ENCODE measurements at regions of chr2 and their contacts with region 1.

Region 1: DNA sequence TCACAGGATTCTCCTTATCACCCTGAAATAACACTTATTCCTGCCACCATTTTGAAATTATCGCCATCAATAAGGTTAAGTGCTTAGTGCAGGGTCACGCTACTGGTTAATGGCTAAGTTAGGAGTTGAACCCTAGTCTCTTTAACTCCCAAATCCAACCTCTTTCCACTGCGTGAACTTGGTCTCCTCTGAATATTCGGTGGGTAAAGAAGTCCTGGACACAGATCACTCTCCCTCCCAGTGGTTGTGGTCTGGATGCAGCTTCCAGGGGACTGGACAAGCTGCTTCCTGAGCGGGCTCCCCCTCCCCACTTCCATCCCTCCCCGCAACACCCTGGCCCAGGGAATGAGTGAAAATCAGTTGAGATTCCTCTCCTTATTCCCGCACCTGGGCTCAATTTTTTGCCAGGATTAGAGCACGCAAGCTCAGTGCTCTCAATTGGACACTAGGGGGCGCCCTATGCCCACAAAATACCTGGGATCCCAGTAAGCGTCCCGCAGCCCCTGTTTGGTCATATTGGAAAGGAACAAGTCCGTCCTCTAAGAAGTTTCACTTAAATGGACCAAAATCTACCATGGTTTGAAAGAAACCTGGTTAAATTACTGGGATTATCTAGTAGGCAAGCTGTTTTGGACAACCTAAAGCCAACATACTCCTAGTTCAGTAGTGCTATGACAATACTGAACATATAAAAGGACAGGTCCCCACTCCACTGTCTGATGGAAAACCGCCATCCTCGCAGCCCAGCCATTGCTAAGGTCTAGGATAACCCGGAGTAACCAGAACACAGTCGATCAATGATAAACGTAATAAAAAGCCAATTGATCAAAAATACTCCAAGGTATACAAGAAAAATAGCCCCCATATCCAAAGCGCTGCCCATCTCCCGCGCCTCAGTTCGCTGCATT is 40.4 kb downstream of the DHRS9 start:
- DNase-seq: peak; percentile 49 to 89
- H3K4me3 ChIP-seq: peak overlapping the region in 2 of 4 experiments; percentile 5 to 35; a peak in 2 of 8 replicates
- H3K27ac ChIP-seq: no peak overlapping the region
- H3K4me1 ChIP-seq: peaks cover 0 to 6% (median 3%) of the 10 kb centered on the region in 4 experiments; a peak in 3 of 7 replicates
- H3K27me3 ChIP-seq: no peaks in the 10 kb centered on the region
- CTCF ChIP-seq: peak; percentile 71 to 87 (median 86)
- EP300 ChIP-seq: no peak
- POLR2A ChIP-seq: no peak
- RAD21 ChIP-seq: peak; percentile 94 to 95

Region 2: GRCh38 chr2:169095621-169096105 is 14.1 kb before region 1 on chr2:
- CTCF ChIA-PET with region 1: interaction called, 23 read pairs
- POLR2A ChIA-PET with region 1: no interaction called
- DNase-seq: no peak
- H3K4me3 ChIP-seq: no peak overlapping the region
- H3K27ac ChIP-seq: no peak overlapping the region
- H3K4me1 ChIP-seq: no peaks in the 10 kb centered on the region
- H3K27me3 ChIP-seq: no peaks in the 10 kb centered on the region; a peak in 2 of 7 replicates
- CTCF ChIP-seq: no peak
- EP300 ChIP-seq: no peak
- POLR2A ChIP-seq: no peak
- RAD21 ChIP-seq: no peak

Region 3: GRCh38 chr2:169131587-169132512 is 22.1 kb after region 1 on chr2:
- CTCF ChIA-PET with region 1: interaction called, 59 read pairs
- POLR2A ChIA-PET with region 1: interaction called, 4 read pairs
- DNase-seq: no peak
- H3K4me3 ChIP-seq: no peak overlapping the region
- H3K27ac ChIP-seq: no peak overlapping the region
- H3K4me1 ChIP-seq: no peaks in the 10 kb centered on the region
- H3K27me3 ChIP-seq: no peaks in the 10 kb centered on the region
- CTCF ChIP-seq: peak in 2 of 3 experiments; percentile 39 to 71; a peak in 2 of 4 replicates
- EP300 ChIP-seq: no peak
- POLR2A ChIP-seq: no peak
- RAD21 ChIP-seq: peak; percentile 34 to 44

Region 4: DNA sequence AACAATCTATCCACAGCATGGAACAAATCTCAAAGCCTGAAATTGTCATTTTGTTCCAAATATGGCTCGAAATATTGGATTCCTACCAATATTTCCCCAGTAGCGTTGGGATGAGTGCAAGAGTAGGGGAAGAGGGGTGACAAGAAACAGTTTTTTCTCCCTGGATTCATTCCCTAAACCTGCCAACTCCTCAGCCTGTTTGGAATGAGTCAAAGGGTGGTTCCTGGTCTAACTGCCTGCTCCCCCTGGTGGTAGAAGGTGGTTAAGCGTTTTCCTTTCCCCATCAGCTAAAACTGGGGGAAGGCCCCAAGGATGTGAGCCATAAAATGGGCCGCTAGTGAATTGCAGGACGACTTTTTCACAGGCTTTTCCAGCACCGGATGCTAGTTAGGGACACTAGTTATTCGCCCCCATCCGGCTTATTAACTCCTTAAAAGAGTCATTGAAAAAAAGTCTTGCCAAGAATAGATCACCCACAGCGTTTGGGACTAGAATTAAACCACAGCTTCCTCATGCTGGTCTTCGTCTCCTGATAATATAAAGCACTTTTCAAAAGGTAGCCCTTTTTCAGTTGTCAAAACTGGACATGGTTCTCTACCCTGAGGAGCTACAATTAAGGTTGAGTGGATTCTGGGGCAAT is 32.1 kb after region 1 on chr2:
- CTCF ChIA-PET with region 1: interaction called, 74 read pairs
- POLR2A ChIA-PET with region 1: no interaction called
- DNase-seq: peak; percentile 31 to 90
- H3K4me3 ChIP-seq: no peak overlapping the region
- H3K27ac ChIP-seq: no peak overlapping the region
- H3K4me1 ChIP-seq: peaks cover 0 to 10% (median 7%) of the 10 kb centered on the region in 4 experiments; a peak in 5 of 7 replicates
- H3K27me3 ChIP-seq: no peaks in the 10 kb centered on the region
- CTCF ChIP-seq: peak; percentile 75 to 94 (median 76)
- EP300 ChIP-seq: no peak
- POLR2A ChIP-seq: no peak
- RAD21 ChIP-seq: peak; percentile 55 to 70

Region 5: DNA sequence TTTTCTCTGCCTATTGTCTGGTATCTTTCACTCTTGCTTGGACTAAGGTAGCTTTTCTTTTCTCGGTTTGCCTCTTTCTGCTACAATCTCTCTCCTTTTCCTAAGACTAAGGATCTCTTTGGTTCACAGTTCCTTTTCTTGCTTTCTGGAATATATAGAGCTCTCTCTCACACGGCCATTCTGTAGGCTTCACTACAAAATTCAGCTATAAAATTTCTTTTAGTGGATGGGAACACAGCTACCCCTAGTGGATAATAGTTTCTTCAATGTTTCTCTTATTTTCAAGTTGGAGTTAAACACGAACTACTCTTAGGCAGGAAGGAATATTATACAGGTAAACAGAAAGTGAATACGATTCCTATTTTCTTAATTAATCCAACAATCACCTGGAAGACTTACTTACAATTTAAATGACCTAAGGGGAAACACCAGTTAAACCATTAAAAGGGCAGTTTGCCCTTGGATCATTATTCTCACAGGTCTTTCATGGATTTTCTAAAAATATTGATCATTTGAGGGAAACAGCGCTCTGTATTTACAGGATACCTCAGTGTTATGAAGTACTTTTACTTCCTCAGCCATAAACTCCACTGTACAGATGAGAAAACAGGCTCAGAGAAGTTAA is 112.1 kb after region 1 on chr2:
- CTCF ChIA-PET with region 1: interaction called, 66 read pairs
- POLR2A ChIA-PET with region 1: no interaction called
- DNase-seq: no peak
- H3K4me3 ChIP-seq: no peak overlapping the region
- H3K27ac ChIP-seq: no peak overlapping the region
- H3K4me1 ChIP-seq: no peaks in the 10 kb centered on the region
- H3K27me3 ChIP-seq: no peaks in the 10 kb centered on the region
- CTCF ChIP-seq: peak in 2 of 3 experiments; percentile 16 to 46; a peak in 2 of 4 replicates
- EP300 ChIP-seq: no peak
- POLR2A ChIP-seq: no peak
- RAD21 ChIP-seq: peak; percentile 57 to 65

Region 6: DNA sequence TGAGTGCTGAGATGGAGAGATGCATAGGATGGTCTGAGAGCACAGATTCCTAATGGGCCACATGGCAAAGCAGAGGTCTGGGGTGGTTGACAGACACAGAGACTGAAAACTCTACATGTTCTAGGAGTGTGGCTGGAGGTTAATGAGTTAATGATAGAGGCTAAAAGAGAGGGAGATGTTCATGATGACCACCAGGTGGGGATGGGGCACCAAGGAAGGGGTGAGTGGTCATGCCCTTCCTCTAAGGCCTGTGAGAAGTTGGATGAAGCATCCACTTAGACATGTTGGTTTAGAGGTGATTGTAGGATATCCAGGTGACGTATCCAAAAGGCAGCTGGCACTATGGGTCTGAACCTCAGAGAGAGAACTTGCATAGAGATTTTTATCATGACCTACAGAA is 150.5 kb after region 1 on chr2:
- CTCF ChIA-PET with region 1: no interaction called
- POLR2A ChIA-PET with region 1: no interaction called
- DNase-seq: peak; percentile 21 to 52
- H3K4me3 ChIP-seq: no peak overlapping the region
- H3K27ac ChIP-seq: no peak overlapping the region
- H3K4me1 ChIP-seq: peaks cover 0 to 4% (median 0%) of the 10 kb centered on the region in 4 experiments; a peak in 1 of 7 replicates
- H3K27me3 ChIP-seq: no peaks in the 10 kb centered on the region
- CTCF ChIP-seq: peak; percentile 62 to 78 (median 70)
- EP300 ChIP-seq: no peak
- POLR2A ChIP-seq: no peak
- RAD21 ChIP-seq: peak; percentile 89 to 94

Region 7: DNA sequence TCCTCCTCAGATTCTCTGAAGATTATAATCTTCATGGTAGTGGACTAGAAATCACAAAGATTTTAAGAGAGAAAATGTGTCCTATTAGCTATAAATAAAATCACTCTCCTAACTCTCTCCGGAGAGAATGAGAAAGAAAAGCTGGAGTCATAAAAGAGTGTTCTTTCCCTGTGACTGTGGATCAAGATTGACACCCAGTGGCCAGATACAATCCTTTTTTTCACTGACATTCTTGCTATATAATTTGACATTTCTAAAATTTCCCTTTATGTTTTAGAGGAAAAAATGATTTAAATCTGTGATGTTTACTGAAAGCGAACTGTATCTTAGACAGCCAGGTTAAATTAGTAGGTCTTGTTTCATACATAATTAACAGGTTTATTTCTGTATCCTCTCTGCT is 287.9 kb after region 1 on chr2:
- CTCF ChIA-PET with region 1: interaction called, 39 read pairs
- POLR2A ChIA-PET with region 1: no interaction called
- DNase-seq: no peak
- H3K4me3 ChIP-seq: no peak overlapping the region
- H3K27ac ChIP-seq: no peak overlapping the region
- H3K4me1 ChIP-seq: peaks cover 0 to 9% (median 3%) of the 10 kb centered on the region in 4 experiments; a peak in 3 of 7 replicates
- H3K27me3 ChIP-seq: no peaks in the 10 kb centered on the region
- CTCF ChIP-seq: peak in 2 of 3 experiments; percentile 31 to 36; a peak in 2 of 4 replicates
- EP300 ChIP-seq: no peak
- POLR2A ChIP-seq: no peak
- RAD21 ChIP-seq: peak; percentile 72 to 75

Measured in H1 (cell line).